ENCODE measurements at regions of chr21 and their contacts with region 1.

Region 1: DNA sequence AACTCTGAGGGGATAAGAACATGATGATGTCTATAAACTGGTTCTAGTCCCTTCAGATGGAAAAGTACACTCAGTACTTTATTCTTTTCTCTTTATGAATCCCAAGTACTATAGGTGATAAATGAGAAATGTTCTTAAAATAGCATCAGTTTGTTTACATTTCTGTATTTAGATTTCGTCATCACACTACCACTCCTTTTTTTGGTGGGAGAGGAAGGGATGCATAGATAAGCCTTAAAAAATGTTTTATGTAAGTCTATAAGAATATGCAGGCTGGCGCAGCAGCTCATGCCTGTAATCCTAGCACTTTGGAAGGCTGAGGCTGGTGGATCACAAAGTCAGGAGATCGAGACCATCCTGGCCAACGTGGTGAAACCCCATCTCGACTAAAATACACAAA is 144.8 kb downstream of the USP25 start:
- DNase-seq: no peak
- H3K4me3 ChIP-seq: no peak overlapping the region
- H3K27ac ChIP-seq: no peak overlapping the region
- H3K4me1 ChIP-seq: no peaks in the 10 kb centered on the region
- H3K27me3 ChIP-seq: no peaks in the 10 kb centered on the region
- CTCF ChIP-seq: no peak

Region 2: GRCh38 chr21:15809818-15810217 is 64.8 kb before region 1 on chr21:
- intact Hi-C with region 1: loop called (anchors 2 kb)
- DNase-seq: no peak
- H3K4me3 ChIP-seq: no peak overlapping the region
- H3K27ac ChIP-seq: no peak overlapping the region
- H3K4me1 ChIP-seq: no peaks in the 10 kb centered on the region
- H3K27me3 ChIP-seq: no peaks in the 10 kb centered on the region
- CTCF ChIP-seq: no peak